Heart left ventricle (tissue), 16 donors: ENCODE measurements at regions of chr12 and their contacts with region 1.

Region 1: GRCh38 chr12:4857472-4858291 is 52.0 kb upstream of the KCNA1 start:
- DNase-seq: peak in 4 of 5 donors; percentile 63 to 66 (median 64)
- ATAC-seq: peak; percentile 68 to 86 (median 78)
- H3K4me3 ChIP-seq: peak overlapping the region in 7 of 12 donors; percentile 4 to 44 (median 26)
- H3K27ac ChIP-seq: peak overlapping the region in 3 of 12 donors; percentile 17 to 52 (median 20)
- H3K4me1 ChIP-seq: peaks cover 0 to 36% (median 12%) of the 10 kb centered on the region in 12 donors
- H3K27me3 ChIP-seq: peaks cover 0 to 10% (median 0%) of the 10 kb centered on the region in 9 donors
- CTCF ChIP-seq: peak; percentile 79 to 91 (median 88)
- POLR2A ChIP-seq: no peak

Region 2: DNA sequence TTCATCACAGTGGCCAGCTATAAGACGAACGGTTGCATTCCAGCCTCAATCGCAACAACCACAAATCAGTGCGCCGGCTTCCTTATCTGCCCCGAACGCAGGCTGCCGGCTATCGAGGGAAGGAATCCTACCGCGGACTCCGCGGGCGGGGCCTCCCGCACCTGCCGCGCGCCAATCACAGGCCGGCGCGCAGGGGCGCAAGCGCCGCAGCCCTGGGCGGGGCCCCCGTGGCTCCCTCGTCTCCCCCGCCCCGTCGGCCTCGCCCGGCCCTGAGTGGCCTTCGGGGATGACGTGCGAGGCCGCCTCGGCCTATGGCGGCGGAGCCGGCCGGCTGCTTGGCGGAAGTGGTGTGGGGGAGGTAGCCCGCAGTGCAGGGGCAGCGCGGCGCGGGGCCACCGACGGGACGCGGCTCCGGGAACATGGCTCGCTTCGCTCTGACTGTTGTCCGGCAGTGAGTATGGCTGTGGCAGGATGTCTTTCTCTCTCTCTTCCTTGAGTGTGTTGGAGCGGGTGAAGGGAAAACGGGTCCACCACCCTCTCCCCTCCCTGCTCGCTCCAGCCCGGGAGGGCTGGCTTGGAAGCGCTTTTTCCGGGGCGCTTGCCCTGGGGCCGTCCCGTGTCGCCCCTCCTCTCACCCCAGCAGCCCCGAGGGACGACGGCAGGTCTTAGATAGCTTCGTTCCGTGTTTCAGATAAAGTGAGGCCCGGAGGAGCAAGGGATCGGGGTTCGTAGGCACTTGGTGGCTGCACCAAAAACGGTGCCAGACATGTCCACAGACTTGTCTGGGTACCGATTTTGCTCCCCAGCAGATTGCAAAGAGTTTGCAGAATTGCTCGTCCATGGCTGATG is 536.6 kb before region 1 on chr12 and contains the start of gene TIGAR:
- intact Hi-C with region 1: no loop called
- DNase-seq: peak; percentile 95 to 97 (median 96)
- ATAC-seq: peak; percentile 99 to 100 (median 100)
- H3K4me3 ChIP-seq: peak within 1 kb of the TSS; percentile 78 to 99 (median 94)
- H3K27ac ChIP-seq: peak within 1 kb of the TSS; percentile 78 to 95 (median 91)
- H3K4me1 ChIP-seq: peaks cover 4 to 43% (median 16%) of the 10 kb centered on the region in 12 donors
- H3K27me3 ChIP-seq: no peaks in the 10 kb centered on the region
- CTCF ChIP-seq: no peak
- POLR2A ChIP-seq: peak in 1 of 2 donors; percentile 95
- total RNA-seq, gene TIGAR: 6.4 to 16.4 (median 14.0) TPM

Region 3: DNA sequence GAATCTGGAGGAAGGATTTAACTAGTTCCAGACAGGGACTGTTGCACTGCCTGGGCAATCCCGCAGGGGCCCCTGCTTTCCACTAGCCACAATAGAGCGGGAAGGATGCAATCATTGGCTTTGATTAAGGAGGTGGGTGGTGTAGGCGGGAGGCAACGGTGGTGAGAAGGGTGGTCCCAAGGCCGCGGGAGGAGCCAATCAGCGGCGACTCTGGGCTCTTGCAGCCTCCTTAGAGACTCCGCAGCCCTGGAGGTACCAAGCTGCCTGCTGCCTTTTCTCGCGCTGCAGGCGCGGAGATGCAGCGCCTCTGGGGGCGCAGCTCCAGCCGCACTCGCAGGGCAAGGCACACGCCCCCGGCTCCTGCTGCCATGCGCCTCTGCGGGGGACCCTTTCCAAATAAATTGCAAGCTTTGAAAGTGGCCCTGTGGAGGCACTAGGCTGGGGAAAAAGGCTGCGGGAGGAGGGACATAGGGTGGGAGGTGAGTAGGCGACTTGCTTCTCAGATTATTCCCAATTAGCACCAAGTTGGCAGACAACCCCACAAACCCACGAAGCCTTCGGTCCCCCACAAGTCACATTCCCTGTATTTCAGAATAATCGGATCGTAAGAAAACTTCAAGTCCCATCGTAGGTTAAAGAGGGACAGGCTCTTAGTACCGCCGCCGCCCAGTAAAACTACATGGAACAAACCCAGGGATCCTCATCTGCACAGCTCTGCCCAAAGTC is 51.2 kb after region 1 on chr12:
- intact Hi-C with region 1: no loop called
- DNase-seq: no peak
- ATAC-seq: peak in 3 of 4 donors; percentile 26 to 40 (median 34)
- H3K4me3 ChIP-seq: peak overlapping the region in 11 of 12 donors; percentile 14 to 50 (median 38)
- H3K27ac ChIP-seq: no peak overlapping the region
- H3K4me1 ChIP-seq: peaks cover 0 to 28% (median 21%) of the 10 kb centered on the region in 12 donors
- H3K27me3 ChIP-seq: peaks cover 29 to 91% (median 58%) of the 10 kb centered on the region in 9 donors
- CTCF ChIP-seq: peak in 2 of 12 donors; percentile 10 to 17
- POLR2A ChIP-seq: no peak

Region 4: GRCh38 chr12:5003020-5003666 is 145.5 kb after region 1 on chr12:
- intact Hi-C with region 1: loop called (anchors 1 to 5 kb)
- DNase-seq: peak; percentile 54 to 77 (median 71)
- ATAC-seq: peak; percentile 82 to 91 (median 89)
- H3K4me3 ChIP-seq: no peak overlapping the region
- H3K27ac ChIP-seq: no peak overlapping the region
- H3K4me1 ChIP-seq: peaks cover 0 to 6% (median 2%) of the 10 kb centered on the region in 12 donors
- H3K27me3 ChIP-seq: peaks cover 0 to 10% (median 0%) of the 10 kb centered on the region in 9 donors
- CTCF ChIP-seq: peak; percentile 75 to 93 (median 86)
- POLR2A ChIP-seq: no peak

Region 5: GRCh38 chr12:5083955-5084849 is 226.5 kb after region 1 on chr12:
- intact Hi-C with region 1: loop called (anchors 1 to 10 kb)
- DNase-seq: peak in 1 of 5 donors; percentile 30
- ATAC-seq: peak in 3 of 4 donors; percentile 41 to 63 (median 49)
- H3K4me3 ChIP-seq: no peak overlapping the region
- H3K27ac ChIP-seq: no peak overlapping the region
- H3K4me1 ChIP-seq: peaks cover 0 to 9% (median 0%) of the 10 kb centered on the region in 12 donors
- H3K27me3 ChIP-seq: no peaks in the 10 kb centered on the region
- CTCF ChIP-seq: peak; percentile 63 to 92 (median 77)
- POLR2A ChIP-seq: no peak